ENCODE measurements at regions of chr17 and their contacts with region 1.

Region 1: GRCh38 chr17:29640413-29640812 is 17.7 kb upstream of the CORO6 start:
- DNase-seq: no peak
- H3K4me3 ChIP-seq: no peak overlapping the region
- H3K27ac ChIP-seq: peak overlapping the region; percentile 88
- H3K4me1 ChIP-seq: peaks cover 44% of the 10 kb centered on the region
- H3K27me3 ChIP-seq: no peaks in the 10 kb centered on the region
- CTCF ChIP-seq: no peak

Region 2: GRCh38 chr17:29589524-29590410 is 50.6 kb before region 1 on chr17 and contains the start of gene GIT1:
- CTCF ChIA-PET with region 1: interaction called, 9 read pairs
- POLR2A ChIA-PET with region 1: interaction called, 5 read pairs
- intact Hi-C with region 1: loop called (anchors 1 kb)
- DNase-seq: peak; percentile 58 to 86
- H3K4me3 ChIP-seq: peak within 1 kb of the TSS; percentile 93
- H3K27ac ChIP-seq: 0 out of 2 replicates have a peak within 1 kb of the TSS, but pooled peaks have one; percentile 4
- H3K4me1 ChIP-seq: peaks cover 39% of the 10 kb centered on the region
- H3K27me3 ChIP-seq: no peaks in the 10 kb centered on the region
- CTCF ChIP-seq: no peak; the same call in 1 of the 2 replicates
- total RNA-seq, gene GIT1: 84.8 and 100 TPM in 2 replicates

Region 3: DNA sequence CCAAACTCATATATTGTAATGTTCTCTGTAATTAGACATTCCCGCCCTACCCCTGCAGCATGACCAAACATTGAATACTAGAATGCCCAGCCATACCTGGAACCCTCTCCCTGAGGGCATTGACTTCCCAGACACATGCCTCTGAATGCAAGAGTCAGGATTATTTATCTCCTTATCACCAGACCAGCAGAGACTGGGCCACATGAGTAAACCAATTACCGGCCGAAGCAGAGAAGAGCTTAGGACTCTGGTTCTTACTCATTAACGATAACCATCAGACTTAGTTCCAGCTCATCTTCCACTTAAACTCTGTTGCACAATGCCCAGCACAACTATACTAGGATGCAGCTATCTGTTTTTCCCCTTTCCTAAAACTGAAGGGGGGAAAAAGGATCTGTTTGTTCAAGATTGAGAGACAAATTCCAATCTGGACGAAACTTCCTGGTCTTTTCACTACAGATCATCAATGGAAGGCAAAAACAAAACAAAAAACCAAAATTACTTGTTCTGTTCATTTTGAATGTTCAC is 70.5 kb after region 1 on chr17:
- CTCF ChIA-PET with region 1: no interaction called
- POLR2A ChIA-PET with region 1: no interaction called
- intact Hi-C with region 1: loop called (anchors 1 kb)
- DNase-seq: peak; percentile 77 to 96
- H3K4me3 ChIP-seq: peak overlapping the region; percentile 9; the same call in 1 of the 2 replicates
- H3K27ac ChIP-seq: peak overlapping the region; percentile 81
- H3K4me1 ChIP-seq: peaks cover 40% of the 10 kb centered on the region
- H3K27me3 ChIP-seq: no peaks in the 10 kb centered on the region
- CTCF ChIP-seq: no peak; the same call in 1 of the 2 replicates

Region 4: DNA sequence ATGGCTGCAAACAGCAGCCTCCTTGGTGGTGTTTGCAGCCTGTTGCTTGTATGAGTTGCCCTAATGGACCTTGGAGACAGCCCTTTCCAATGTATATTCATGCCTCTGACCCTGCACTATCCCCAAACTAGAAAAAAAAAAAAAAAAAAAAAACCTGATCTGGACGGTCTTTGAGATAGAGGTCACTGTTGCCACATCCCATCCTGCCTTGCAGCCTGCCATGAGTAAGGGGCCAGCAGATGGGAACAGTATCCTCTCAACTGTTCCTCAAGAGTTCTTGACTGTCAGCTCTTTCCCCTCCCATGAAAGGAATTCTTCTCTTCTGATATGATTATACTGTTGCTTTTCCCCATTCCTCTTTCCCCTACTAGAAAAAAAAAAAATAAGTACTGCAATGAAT is 137.2 kb after region 1 on chr17:
- CTCF ChIA-PET with region 1: interaction called, 22 read pairs
- POLR2A ChIA-PET with region 1: interaction called, 6 read pairs
- intact Hi-C with region 1: loop called (anchors 1 kb)
- DNase-seq: no peak
- H3K4me3 ChIP-seq: no peak overlapping the region
- H3K27ac ChIP-seq: no peak overlapping the region
- H3K4me1 ChIP-seq: no peaks in the 10 kb centered on the region; the same call in 1 of the 2 replicates
- H3K27me3 ChIP-seq: no peaks in the 10 kb centered on the region
- CTCF ChIP-seq: no peak

Region 5: DNA sequence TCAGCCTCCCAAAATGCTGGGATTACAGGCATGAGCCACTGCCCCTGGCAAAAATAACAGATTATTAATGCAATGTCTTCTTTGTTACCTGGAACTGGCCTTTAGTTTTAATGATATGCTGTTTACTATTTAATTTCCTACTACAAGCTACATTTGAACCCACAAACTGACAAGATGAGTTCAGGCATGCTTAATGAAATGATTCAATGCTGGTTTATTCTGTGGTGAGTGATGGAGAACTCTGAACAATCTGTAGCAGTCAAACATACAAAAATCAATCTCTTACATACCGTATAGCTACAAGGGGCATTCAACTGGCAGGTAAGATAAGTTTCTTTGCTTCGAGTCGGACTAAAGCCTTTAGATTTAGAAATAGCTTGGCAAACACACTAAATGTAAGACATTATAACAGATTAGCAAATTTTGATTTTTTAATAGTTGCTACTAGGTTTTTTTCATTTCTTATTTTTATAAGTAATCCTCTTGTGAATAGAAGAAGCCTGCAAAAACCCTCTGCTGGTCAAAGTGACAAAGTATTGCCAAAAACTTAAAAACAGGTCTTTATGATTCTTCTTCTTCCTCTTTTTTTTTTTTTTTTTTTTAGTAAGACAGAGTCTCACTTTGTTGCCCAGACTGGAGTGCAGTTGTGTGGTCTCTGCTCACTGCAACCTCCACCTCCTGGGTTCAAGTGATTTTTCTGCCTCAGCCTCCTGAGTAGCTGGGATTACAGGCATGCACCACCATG is 151.1 kb after region 1 on chr17:
- CTCF ChIA-PET with region 1: no interaction called
- POLR2A ChIA-PET with region 1: no interaction called
- intact Hi-C with region 1: no loop called
- DNase-seq: no peak
- H3K4me3 ChIP-seq: no peak overlapping the region
- H3K27ac ChIP-seq: no peak overlapping the region
- H3K4me1 ChIP-seq: peaks cover 4% of the 10 kb centered on the region
- H3K27me3 ChIP-seq: no peaks in the 10 kb centered on the region
- CTCF ChIP-seq: no peak

Region 6: DNA sequence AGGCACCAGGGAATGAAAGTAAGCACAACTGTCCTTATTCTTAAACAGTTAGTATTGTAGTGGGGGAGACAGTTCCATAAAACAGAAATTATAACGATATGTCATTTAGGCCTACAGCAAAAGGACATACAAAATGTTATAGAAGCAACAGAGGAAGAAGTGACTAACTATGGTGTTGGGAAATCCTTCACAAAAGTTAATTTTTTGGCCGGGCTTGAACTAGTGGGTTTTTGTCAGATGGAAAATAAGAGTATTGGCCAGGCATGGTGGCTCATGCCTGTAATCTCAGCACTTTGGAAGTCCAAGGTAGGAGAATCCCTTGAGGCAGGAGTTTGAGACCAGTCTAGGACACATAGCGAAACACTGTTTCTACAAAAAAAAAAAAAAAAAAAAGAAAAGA is 161.8 kb after region 1 on chr17:
- CTCF ChIA-PET with region 1: interaction called, 10 read pairs
- POLR2A ChIA-PET with region 1: no interaction called
- intact Hi-C with region 1: loop called (anchors 1 kb)
- DNase-seq: no peak
- H3K4me3 ChIP-seq: no peak overlapping the region
- H3K27ac ChIP-seq: no peak overlapping the region
- H3K4me1 ChIP-seq: no peaks in the 10 kb centered on the region
- H3K27me3 ChIP-seq: no peaks in the 10 kb centered on the region
- CTCF ChIP-seq: no peak

Region 7: DNA sequence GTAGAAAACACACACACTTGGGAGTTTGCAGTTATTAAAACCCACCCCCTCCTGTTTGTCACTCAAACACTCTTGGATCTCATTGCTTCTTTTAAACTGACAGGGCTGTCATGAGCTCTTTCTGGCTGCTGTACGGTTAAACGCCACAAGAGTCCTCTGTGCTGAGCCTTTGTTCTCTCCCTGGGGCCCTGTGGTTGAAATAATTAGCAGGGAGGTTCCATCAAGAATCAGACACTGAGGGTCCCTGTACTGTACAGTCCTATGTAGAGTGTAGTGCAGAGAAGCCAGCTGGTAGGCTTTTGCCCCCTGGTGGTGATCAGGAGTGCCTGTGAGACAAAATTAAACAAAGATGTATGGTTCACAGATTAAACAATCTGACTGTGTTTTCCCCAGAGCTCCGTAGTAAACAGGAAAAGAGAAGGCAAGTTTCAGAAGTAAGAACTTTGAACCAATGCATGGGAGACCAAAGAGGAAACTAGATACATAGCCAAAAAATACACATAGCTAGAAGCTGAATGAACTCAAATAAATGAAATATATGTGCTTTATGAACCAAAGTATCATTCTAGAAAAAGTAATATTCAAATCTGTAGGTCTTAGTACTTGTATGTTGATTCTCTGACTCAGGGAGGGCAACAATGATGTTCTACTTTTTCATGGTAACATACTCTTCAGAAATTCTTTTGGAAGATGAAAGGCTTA is 291.0 kb after region 1 on chr17:
- CTCF ChIA-PET with region 1: interaction called, 28 read pairs
- POLR2A ChIA-PET with region 1: interaction called, 6 read pairs
- intact Hi-C with region 1: loop called (anchors 1 kb)
- DNase-seq: peak; percentile 53 to 68
- H3K4me3 ChIP-seq: peak overlapping the region; percentile 73; the same call in 1 of the 2 replicates
- H3K27ac ChIP-seq: no peak overlapping the region
- H3K4me1 ChIP-seq: peaks cover 32% of the 10 kb centered on the region
- H3K27me3 ChIP-seq: no peaks in the 10 kb centered on the region
- CTCF ChIP-seq: peak; percentile 95

Region 8: GRCh38 chr17:30021708-30022317 is 381.4 kb after region 1 on chr17:
- CTCF ChIA-PET with region 1: interaction called, 5 read pairs
- POLR2A ChIA-PET with region 1: no interaction called
- intact Hi-C with region 1: loop called (anchors 1 kb)
- DNase-seq: peak in 1 of 2 experiments; percentile 14
- H3K4me3 ChIP-seq: no peak overlapping the region
- H3K27ac ChIP-seq: no peak overlapping the region
- H3K4me1 ChIP-seq: no peaks in the 10 kb centered on the region; the same call in 1 of the 2 replicates
- H3K27me3 ChIP-seq: no peaks in the 10 kb centered on the region
- CTCF ChIP-seq: peak; percentile 93